Activated CD8-positive, alpha-beta T cell treated with anti-CD3 and anti-CD28 coated beads, Interleukin-2, amount 10 ng/mL, durations not matched to agents 7 days and 5 days (primary cell): ENCODE measurements at regions of chr20 and their contacts with region 1.

Region 1: DNA sequence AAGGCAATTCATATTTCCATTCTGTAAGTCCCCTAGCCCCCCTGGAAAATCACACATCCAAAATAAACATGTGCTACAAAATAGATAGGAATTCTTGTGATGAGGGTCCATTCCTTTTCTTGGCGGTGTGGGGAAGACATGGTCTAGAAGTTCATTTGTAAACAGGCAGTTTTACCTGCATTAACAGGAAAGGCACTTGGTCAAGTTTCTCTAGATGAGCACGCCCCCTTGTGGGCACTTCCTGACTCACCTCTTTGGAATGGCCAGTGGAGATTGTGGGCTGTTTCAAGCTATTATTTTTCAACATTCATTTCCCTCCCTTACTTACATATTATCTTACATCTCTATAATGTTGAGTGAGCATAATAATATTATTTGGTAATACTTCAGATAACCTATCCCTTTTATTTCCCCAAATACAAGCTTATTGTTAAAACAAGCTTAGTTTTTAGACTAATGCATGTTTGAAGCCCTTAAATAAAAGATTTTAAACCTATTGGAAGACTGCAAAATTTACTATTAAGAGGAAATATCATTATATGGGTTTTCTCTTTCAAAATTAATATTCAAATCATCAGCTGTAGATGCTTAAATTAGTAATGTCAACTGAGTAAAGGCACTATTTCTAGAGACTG is 92.1 kb downstream of the TASP1 start:
- DNase-seq: peak; percentile 80
- ATAC-seq: peak; percentile 68
- H3K4me3 Mint-ChIP-seq: no peak overlapping the region
- H3K27ac Mint-ChIP-seq: no peak overlapping the region
- H3K4me1 Mint-ChIP-seq: no peaks in the 10 kb centered on the region
- H3K27me3 Mint-ChIP-seq: no peaks in the 10 kb centered on the region

Region 2: GRCh38 chr20:12925214-12925755 is 621.3 kb before region 1 on chr20:
- CTCF ChIA-PET with region 1: interaction called, 10 read pairs
- POLR2A ChIA-PET with region 1: no interaction called
- DNase-seq: peak; percentile 47
- ATAC-seq: peak; percentile 82
- H3K4me3 Mint-ChIP-seq: no peak overlapping the region
- H3K27ac Mint-ChIP-seq: no peak overlapping the region
- H3K4me1 Mint-ChIP-seq: peaks cover 8% of the 10 kb centered on the region
- H3K27me3 Mint-ChIP-seq: peaks cover 2% of the 10 kb centered on the region

Region 3: GRCh38 chr20:13119583-13119982 is 427.0 kb before region 1 on chr20:
- CTCF ChIA-PET with region 1: interaction called, 29 read pairs
- POLR2A ChIA-PET with region 1: no interaction called
- DNase-seq: peak; percentile 58
- ATAC-seq: peak; percentile 86
- H3K4me3 Mint-ChIP-seq: no peak overlapping the region
- H3K27ac Mint-ChIP-seq: no peak overlapping the region
- H3K4me1 Mint-ChIP-seq: no peaks in the 10 kb centered on the region
- H3K27me3 Mint-ChIP-seq: no peaks in the 10 kb centered on the region

Region 4: GRCh38 chr20:13325033-13325432 is 221.6 kb before region 1 on chr20:
- CTCF ChIA-PET with region 1: interaction called, 20 read pairs
- POLR2A ChIA-PET with region 1: no interaction called
- DNase-seq: no peak
- ATAC-seq: no peak
- H3K4me3 Mint-ChIP-seq: no peak overlapping the region
- H3K27ac Mint-ChIP-seq: no peak overlapping the region
- H3K4me1 Mint-ChIP-seq: peaks cover 10% of the 10 kb centered on the region
- H3K27me3 Mint-ChIP-seq: peaks cover 6% of the 10 kb centered on the region

Region 5: DNA sequence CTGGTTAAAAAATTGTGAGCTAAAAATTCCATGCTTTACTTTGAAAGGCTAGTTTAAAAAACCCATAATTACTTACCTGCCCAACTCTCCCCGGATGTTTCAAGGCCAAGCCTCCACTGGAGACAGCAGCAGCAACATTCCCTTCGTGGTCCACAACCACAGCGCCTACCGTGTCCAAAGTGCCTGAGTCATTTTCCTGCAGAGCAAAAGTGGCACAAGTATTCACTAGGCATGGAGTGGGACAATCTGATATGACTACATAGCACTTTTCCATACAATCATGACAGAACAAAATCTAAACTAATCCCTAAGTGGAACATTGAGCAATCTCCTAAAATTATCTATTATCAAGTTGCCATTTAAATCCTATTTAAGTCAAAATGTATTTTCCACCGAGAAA is 12.7 kb before region 1 on chr20:
- CTCF ChIA-PET with region 1: interaction called, 43 read pairs
- POLR2A ChIA-PET with region 1: no interaction called
- DNase-seq: no peak
- ATAC-seq: no peak
- H3K4me3 Mint-ChIP-seq: no peak overlapping the region
- H3K27ac Mint-ChIP-seq: no peak overlapping the region
- H3K4me1 Mint-ChIP-seq: no peaks in the 10 kb centered on the region
- H3K27me3 Mint-ChIP-seq: no peaks in the 10 kb centered on the region

Region 6: DNA sequence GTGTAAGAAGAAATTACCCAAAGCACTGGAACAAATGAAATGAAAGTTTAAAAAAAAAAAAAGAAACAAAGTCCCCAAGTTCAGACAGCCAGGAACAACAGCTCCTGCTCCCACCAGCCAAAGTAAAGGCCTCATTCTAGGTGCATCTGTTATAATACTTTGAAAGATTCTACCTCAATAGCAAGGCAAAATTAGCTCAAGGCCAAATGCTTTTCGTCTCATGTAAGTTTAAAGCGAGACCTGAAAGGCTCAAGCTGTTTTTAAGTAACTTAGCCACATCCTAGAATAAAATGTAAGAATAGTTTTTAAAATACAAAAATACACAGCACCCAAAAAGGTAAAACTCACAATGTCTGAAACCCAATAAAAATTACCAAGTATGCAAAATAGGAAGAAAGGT is 27.5 kb after region 1 on chr20:
- CTCF ChIA-PET with region 1: interaction called, 10 read pairs
- POLR2A ChIA-PET with region 1: no interaction called
- DNase-seq: no peak
- ATAC-seq: no peak
- H3K4me3 Mint-ChIP-seq: no peak overlapping the region
- H3K27ac Mint-ChIP-seq: no peak overlapping the region
- H3K4me1 Mint-ChIP-seq: no peaks in the 10 kb centered on the region
- H3K27me3 Mint-ChIP-seq: no peaks in the 10 kb centered on the region